Calu3 (cell line): ENCODE measurements at regions of chr14 and their contacts with region 1.

Region 1: GRCh38 chr14:28515571-28515970 is 251.0 kb upstream of the FOXG1 start:
- DNase-seq: no peak
- H3K4me3 Mint-ChIP-seq: no peak overlapping the region
- H3K27ac Mint-ChIP-seq: no peak overlapping the region
- H3K4me1 Mint-ChIP-seq: no peaks in the 10 kb centered on the region
- H3K27me3 Mint-ChIP-seq: no peaks in the 10 kb centered on the region
- CTCF ChIP-seq: no peak

Region 2: GRCh38 chr14:28130610-28131284 is 384.8 kb before region 1 on chr14:
- CTCF ChIA-PET with region 1: no interaction called
- intact Hi-C with region 1: no loop called
- DNase-seq: no peak
- H3K4me3 Mint-ChIP-seq: no peak overlapping the region
- H3K27ac Mint-ChIP-seq: no peak overlapping the region
- H3K4me1 Mint-ChIP-seq: no peaks in the 10 kb centered on the region
- H3K27me3 Mint-ChIP-seq: no peaks in the 10 kb centered on the region
- CTCF ChIP-seq: no peak

Region 3: GRCh38 chr14:28468191-28469151 is 47.1 kb before region 1 on chr14:
- CTCF ChIA-PET with region 1: no interaction called
- intact Hi-C with region 1: loop called (anchors 2 kb)
- DNase-seq: no peak
- H3K4me3 Mint-ChIP-seq: no peak overlapping the region
- H3K27ac Mint-ChIP-seq: no peak overlapping the region
- H3K4me1 Mint-ChIP-seq: no peaks in the 10 kb centered on the region
- H3K27me3 Mint-ChIP-seq: no peaks in the 10 kb centered on the region
- CTCF ChIP-seq: no peak

Region 4: DNA sequence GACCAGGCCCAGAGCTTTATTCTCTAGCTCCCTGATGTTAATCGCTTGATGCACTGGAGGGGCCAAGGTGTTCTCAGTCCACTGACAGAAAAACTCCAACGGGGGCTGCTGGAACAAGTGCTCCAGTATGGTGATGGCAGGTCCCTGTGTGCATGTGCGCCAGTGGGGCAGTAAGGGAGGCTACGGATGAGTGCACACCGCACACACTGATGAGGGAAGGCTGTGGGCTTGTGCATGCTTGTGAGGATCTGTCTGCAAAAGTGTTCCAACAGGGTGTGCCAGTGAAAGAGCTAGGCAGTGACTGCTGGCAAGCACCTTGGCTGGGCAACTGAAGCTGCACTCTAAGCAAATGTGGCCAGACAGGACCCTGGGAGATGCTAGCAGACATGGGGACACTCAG is 21.3 kb after region 1 on chr14:
- CTCF ChIA-PET with region 1: no interaction called
- intact Hi-C with region 1: loop called (anchors 1 kb)
- DNase-seq: no peak
- H3K4me3 Mint-ChIP-seq: no peak overlapping the region
- H3K27ac Mint-ChIP-seq: no peak overlapping the region
- H3K4me1 Mint-ChIP-seq: no peaks in the 10 kb centered on the region
- H3K27me3 Mint-ChIP-seq: no peaks in the 10 kb centered on the region
- CTCF ChIP-seq: no peak